CD14-positive monocyte (primary cell): ENCODE measurements at regions of chr11 and their contacts with region 1.

Region 1: DNA sequence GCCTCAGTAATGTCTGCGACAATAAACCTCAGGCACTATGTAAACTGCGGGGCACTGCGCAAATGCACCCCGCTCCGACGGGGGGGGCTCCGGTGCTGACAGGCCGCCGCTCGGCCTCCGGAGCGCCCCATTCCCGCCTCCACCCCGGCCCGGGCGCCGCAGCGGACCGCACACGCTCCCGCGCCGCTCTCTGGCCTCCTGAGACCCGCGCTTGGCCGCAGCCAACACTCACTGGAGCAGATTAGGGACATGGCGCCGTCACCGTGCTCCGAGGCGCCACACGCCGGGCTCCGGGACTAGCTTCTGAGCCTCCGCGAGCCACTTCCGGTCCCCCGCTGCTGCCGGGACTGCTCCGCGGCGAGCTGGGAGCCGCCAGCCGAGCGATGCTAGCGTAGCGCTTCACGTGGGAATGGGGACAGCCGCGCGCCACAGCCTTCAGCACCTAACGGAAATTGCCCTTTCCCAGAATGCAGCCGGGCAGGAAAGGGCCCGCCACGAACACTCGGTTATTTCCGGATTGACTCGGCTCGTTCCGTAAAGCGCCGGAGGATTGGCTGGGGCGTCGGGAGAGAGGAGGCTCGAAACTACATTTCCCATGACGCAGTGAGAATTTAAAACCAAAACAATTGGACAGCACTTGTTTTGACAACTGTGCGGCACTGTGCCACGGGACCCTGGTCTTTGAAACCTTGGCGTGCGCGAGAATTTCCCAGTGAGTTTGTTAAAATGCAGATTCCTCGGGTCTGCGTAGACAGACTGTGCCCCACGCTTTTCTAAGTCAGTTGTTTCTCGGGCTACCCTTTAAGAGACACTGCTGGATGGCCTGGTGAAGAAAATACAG is at the start of gene PRPF19:
- DNase-seq: peak; percentile 95 to 97 (median 96)
- H3K4me3 ChIP-seq: peak within 1 kb of the TSS; percentile 61 to 90 (median 66)
- H3K4me3 Mint-ChIP-seq: peak within 1 kb of the TSS; percentile 86 to 89
- H3K27ac ChIP-seq: peak within 1 kb of the TSS; percentile 65 to 91
- H3K27ac Mint-ChIP-seq: peak within 1 kb of the TSS; percentile 91 to 97 (median 95)
- H3K4me1 ChIP-seq: peaks cover 50 to 56% of the 10 kb centered on the region in 2 donors
- H3K4me1 Mint-ChIP-seq: peaks cover 64% of the 10 kb centered on the region
- H3K27me3 ChIP-seq: no peaks in the 10 kb centered on the region
- H3K27me3 Mint-ChIP-seq: peaks cover 0 to 5% (median 2%) of the 10 kb centered on the region in 3 donors
- CTCF ChIP-seq: no peak
- polyA plus RNA-seq, gene PRPF19: 7.8 to 33.2 (median 12.2) TPM

Region 2: GRCh38 chr11:60634126-60634525 is 272.2 kb before region 1 on chr11:
- intact Hi-C with region 1: no loop called
- DNase-seq: peak in 1 of 3 donors; percentile 4
- H3K4me3 ChIP-seq: no peak overlapping the region
- H3K4me3 Mint-ChIP-seq: no peak overlapping the region
- H3K27ac ChIP-seq: no peak overlapping the region
- H3K27ac Mint-ChIP-seq: no peak overlapping the region
- H3K4me1 ChIP-seq: peaks cover 13 to 14% of the 10 kb centered on the region in 2 donors
- H3K4me1 Mint-ChIP-seq: peaks cover 21% of the 10 kb centered on the region
- H3K27me3 ChIP-seq: no peaks in the 10 kb centered on the region
- H3K27me3 Mint-ChIP-seq: peaks cover 0 to 9% (median 1%) of the 10 kb centered on the region in 3 donors
- CTCF ChIP-seq: peak; percentile 35

Region 3: DNA sequence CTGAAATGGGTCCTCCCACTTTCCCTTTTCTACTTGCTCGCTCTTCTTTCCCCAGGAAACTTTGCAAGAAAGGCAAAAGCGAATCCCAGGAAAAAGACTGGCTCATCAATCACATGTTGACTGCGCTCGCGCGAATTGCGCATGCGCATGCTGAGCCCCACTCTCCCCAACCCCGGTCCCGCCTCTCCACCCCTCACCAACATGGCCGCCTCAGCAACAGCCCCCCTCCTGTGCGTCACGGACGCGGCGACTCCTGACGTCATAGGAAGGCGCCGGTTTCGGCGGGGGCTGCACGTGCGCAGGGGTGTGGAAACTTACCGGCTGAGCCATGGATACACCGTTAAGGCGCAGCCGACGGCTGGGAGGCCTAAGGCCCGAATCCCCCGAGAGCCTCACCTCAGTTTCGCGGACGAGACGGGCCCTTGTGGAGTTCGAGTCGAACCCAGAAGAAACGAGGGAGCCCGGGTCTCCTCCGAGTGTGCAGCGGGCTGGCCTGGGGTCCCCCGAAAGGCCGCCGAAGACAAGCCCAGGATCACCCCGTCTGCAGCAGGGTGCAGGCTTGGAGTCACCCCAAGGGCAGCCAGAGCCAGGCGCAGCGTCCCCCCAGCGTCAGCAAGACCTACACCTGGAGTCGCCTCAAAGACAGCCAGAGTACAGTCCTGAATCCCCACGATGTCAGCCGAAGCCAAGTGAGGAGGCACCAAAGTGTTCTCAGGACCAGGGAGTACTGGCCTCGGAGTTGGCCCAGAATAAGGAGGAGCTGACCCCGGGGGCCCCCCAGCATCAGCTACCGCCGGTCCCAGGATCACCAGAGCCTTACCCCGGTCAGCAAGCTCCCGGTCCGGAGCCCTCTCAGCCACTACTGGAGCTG is 64.3 kb before region 1 on chr11 and contains the start of gene CCDC86:
- intact Hi-C with region 1: loop called in 1 of 2 experiments (anchors 5 kb)
- DNase-seq: peak; percentile 91 to 97 (median 97)
- H3K4me3 ChIP-seq: peak within 1 kb of the TSS; percentile 71 to 91 (median 89)
- H3K4me3 Mint-ChIP-seq: peak within 1 kb of the TSS; percentile 86 to 90
- H3K27ac ChIP-seq: peak within 1 kb of the TSS; percentile 56 to 85
- H3K27ac Mint-ChIP-seq: peak within 1 kb of the TSS; percentile 78 to 94 (median 91)
- H3K4me1 ChIP-seq: peaks cover 34 to 46% of the 10 kb centered on the region in 2 donors
- H3K4me1 Mint-ChIP-seq: peaks cover 46% of the 10 kb centered on the region
- H3K27me3 ChIP-seq: no peaks in the 10 kb centered on the region
- H3K27me3 Mint-ChIP-seq: peaks cover 0 to 5% (median 0%) of the 10 kb centered on the region in 3 donors
- CTCF ChIP-seq: no peak
- polyA plus RNA-seq, gene CCDC86: 7.2 to 10.2 (median 8.3) TPM